HCT116 (cell line): ENCODE measurements at regions of chr11 and their contacts with region 1.

Region 1: GRCh38 chr11:72683782-72684200 is 9.6 kb upstream of the PDE2A start:
- DNase-seq: no peak
- ATAC-seq: peak; percentile 74
- H3K4me3 ChIP-seq: no peak overlapping the region
- H3K27ac ChIP-seq: no peak overlapping the region
- H3K4me1 ChIP-seq: peaks cover 0 to 13% of the 10 kb centered on the region in 2 experiments; a peak in 3 of 4 replicates
- H3K27me3 ChIP-seq: peaks cover 17% of the 10 kb centered on the region
- CTCF ChIP-seq: peak; percentile 88 to 96 (median 96)
- POLR2A ChIP-seq: no peak
- RAD21 ChIP-seq: peak; percentile 88

Region 2: GRCh38 chr11:72585762-72586311 is 98.0 kb before region 1 on chr11:
- CTCF ChIA-PET with region 1: interaction called, 38 read pairs
- POLR2A ChIA-PET with region 1: interaction called, 5 read pairs
- RAD21 ChIA-PET with region 1: interaction called, 9 to 10 read pairs
- intact Hi-C with region 1: loop called (anchors 1 kb)
- DNase-seq: peak; percentile 38
- ATAC-seq: peak; percentile 94
- H3K4me3 ChIP-seq: no peak overlapping the region
- H3K27ac ChIP-seq: no peak overlapping the region
- H3K4me1 ChIP-seq: peaks cover 0 to 6% of the 10 kb centered on the region in 2 experiments; a peak in 1 of 4 replicates
- H3K27me3 ChIP-seq: no peaks in the 10 kb centered on the region
- CTCF ChIP-seq: peak; percentile 82 to 88 (median 85)
- POLR2A ChIP-seq: no peak
- RAD21 ChIP-seq: peak; percentile 86

Region 3: DNA sequence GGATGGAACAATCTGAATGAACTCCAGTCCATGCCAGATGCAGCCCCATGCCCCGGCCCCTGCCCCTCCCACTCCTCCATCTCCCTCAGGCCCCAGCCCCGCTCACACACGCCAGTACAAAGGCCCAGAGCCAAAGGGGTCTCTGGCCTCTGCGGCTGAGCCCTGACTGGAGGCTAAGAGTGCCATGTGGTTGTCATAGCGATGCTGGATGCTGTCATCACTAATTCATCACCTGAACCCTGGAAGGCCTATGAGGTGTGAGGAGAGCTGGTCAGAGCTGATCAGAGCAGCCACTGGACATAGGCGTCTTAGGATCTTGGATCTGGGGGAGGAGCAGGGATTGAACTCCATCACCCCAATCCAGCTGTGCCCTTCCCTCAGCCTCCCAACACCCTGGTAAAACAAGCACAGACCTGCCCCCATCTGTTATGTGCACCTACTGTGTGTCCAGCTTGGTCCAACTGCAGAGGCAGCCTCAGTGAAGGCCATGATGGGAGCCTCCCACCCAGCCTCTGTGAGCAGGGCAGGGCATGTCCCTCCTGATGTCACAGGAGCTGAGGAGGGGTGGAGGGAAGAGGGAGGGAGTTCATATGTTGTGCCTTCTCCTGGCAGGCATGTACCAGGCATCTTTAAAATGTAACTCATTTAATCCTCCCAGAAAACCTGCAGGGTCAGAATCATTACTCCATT is 26.2 kb before region 1 on chr11:
- CTCF ChIA-PET with region 1: interaction called, 12 read pairs
- POLR2A ChIA-PET with region 1: no interaction called
- RAD21 ChIA-PET with region 1: no interaction called
- intact Hi-C with region 1: no loop called
- DNase-seq: no peak
- ATAC-seq: no peak
- H3K4me3 ChIP-seq: no peak overlapping the region
- H3K27ac ChIP-seq: no peak overlapping the region
- H3K4me1 ChIP-seq: peaks cover 0 to 6% of the 10 kb centered on the region in 2 experiments; a peak in 2 of 4 replicates
- H3K27me3 ChIP-seq: no peaks in the 10 kb centered on the region
- CTCF ChIP-seq: no peak
- POLR2A ChIP-seq: no peak
- RAD21 ChIP-seq: no peak

Region 4: DNA sequence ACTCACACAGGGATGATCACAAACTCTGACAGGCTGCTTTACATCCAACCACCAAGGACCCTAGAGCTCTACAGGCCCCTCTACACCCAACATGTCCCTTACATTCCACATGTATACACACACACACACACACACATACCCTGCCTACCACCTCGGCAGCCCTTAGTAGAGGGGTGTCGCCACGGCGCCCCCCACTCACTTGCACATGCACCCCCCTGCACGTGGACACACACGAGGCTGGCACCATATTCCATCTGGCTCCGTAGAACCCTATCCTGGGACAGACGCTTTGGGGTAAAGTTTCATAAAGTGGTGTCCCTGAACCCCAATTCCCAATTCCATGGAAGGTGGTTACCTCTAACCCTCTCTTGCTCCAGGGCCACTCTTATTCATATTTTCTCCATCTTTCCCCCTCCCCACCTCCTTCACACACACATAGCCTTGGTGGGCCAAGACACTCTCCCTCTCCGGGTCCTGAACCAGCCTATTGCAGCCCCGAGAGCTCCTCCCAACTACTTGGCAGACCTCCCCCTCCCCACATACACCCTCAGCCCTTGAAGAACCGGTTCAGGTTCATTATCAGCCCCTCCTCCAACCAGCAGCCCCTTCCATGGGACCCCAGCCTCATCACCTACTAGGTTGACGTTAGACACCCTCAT is 10.4 kb before region 1 on chr11:
- CTCF ChIA-PET with region 1: interaction called, 12 read pairs
- POLR2A ChIA-PET with region 1: no interaction called
- RAD21 ChIA-PET with region 1: no interaction called
- intact Hi-C with region 1: no loop called
- DNase-seq: no peak
- ATAC-seq: no peak
- H3K4me3 ChIP-seq: no peak overlapping the region
- H3K27ac ChIP-seq: no peak overlapping the region
- H3K4me1 ChIP-seq: no peaks in the 10 kb centered on the region; a peak in 1 of 4 replicates
- H3K27me3 ChIP-seq: peaks cover 51% of the 10 kb centered on the region
- CTCF ChIP-seq: no peak
- POLR2A ChIP-seq: no peak
- RAD21 ChIP-seq: no peak